ENCODE measurements at regions of chr6 and their contacts with region 1.

Region 1: GRCh38 chr6:18595774-18596530 is 208.8 kb downstream of the RNF144B start:
- DNase-seq: peak; percentile 46
- ATAC-seq: peak; percentile 98
- H3K4me3 ChIP-seq: no peak overlapping the region
- H3K27ac ChIP-seq: no peak overlapping the region
- H3K4me1 ChIP-seq: no peaks in the 10 kb centered on the region
- H3K27me3 ChIP-seq: no peaks in the 10 kb centered on the region
- CTCF ChIP-seq: peak; percentile 71 to 94 (median 93)
- POLR2A ChIP-seq: no peak
- RAD21 ChIP-seq: peak; percentile 94

Region 2: GRCh38 chr6:18439581-18439980 is 156.4 kb before region 1 on chr6:
- CTCF ChIA-PET with region 1: no interaction called
- POLR2A ChIA-PET with region 1: no interaction called
- RAD21 ChIA-PET with region 1: no interaction called
- intact Hi-C with region 1: no loop called
- DNase-seq: no peak
- ATAC-seq: no peak
- H3K4me3 ChIP-seq: no peak overlapping the region
- H3K27ac ChIP-seq: no peak overlapping the region
- H3K4me1 ChIP-seq: peaks cover 4 to 6% of the 10 kb centered on the region in 2 experiments
- H3K27me3 ChIP-seq: no peaks in the 10 kb centered on the region
- CTCF ChIP-seq: no peak
- POLR2A ChIP-seq: no peak
- RAD21 ChIP-seq: no peak

Region 3: GRCh38 chr6:18748314-18748713 is 152.4 kb after region 1 on chr6:
- CTCF ChIA-PET with region 1: no interaction called
- POLR2A ChIA-PET with region 1: no interaction called
- RAD21 ChIA-PET with region 1: no interaction called
- intact Hi-C with region 1: loop called (anchors 5 kb)
- DNase-seq: no peak
- ATAC-seq: no peak
- H3K4me3 ChIP-seq: no peak overlapping the region
- H3K27ac ChIP-seq: no peak overlapping the region
- H3K4me1 ChIP-seq: no peaks in the 10 kb centered on the region
- H3K27me3 ChIP-seq: peaks cover 3% of the 10 kb centered on the region; the same call in 1 of the 2 replicates
- CTCF ChIP-seq: no peak
- POLR2A ChIP-seq: no peak
- RAD21 ChIP-seq: no peak

Region 4: GRCh38 chr6:18990059-18990978 is 394.4 kb after region 1 on chr6:
- CTCF ChIA-PET with region 1: no interaction called
- POLR2A ChIA-PET with region 1: no interaction called
- RAD21 ChIA-PET with region 1: no interaction called
- intact Hi-C with region 1: loop called (anchors 5 kb)
- DNase-seq: peak; percentile 55
- ATAC-seq: peak; percentile 96
- H3K4me3 ChIP-seq: peak overlapping the region in 1 of 2 experiments; percentile 6; a peak in 1 of 4 replicates
- H3K27ac ChIP-seq: no peak overlapping the region
- H3K4me1 ChIP-seq: peaks cover 0 to 6% of the 10 kb centered on the region in 2 experiments; a peak in 1 of 4 replicates
- H3K27me3 ChIP-seq: no peaks in the 10 kb centered on the region
- CTCF ChIP-seq: peak; percentile 45 to 78 (median 76); a peak in 5 of 6 replicates
- POLR2A ChIP-seq: no peak
- RAD21 ChIP-seq: peak; percentile 66

Region 5: GRCh38 chr6:19107468-19107867 is 511.5 kb after region 1 on chr6:
- CTCF ChIA-PET with region 1: no interaction called
- POLR2A ChIA-PET with region 1: no interaction called
- RAD21 ChIA-PET with region 1: no interaction called
- intact Hi-C with region 1: no loop called
- DNase-seq: no peak
- ATAC-seq: no peak
- H3K4me3 ChIP-seq: no peak overlapping the region
- H3K27ac ChIP-seq: no peak overlapping the region
- H3K4me1 ChIP-seq: no peaks in the 10 kb centered on the region
- H3K27me3 ChIP-seq: no peaks in the 10 kb centered on the region
- CTCF ChIP-seq: no peak
- POLR2A ChIP-seq: no peak
- RAD21 ChIP-seq: no peak

Region 6: GRCh38 chr6:20126789-20127653 is 1531.1 kb after region 1 on chr6:
- CTCF ChIA-PET with region 1: interaction called, 3 read pairs
- POLR2A ChIA-PET with region 1: no interaction called
- RAD21 ChIA-PET with region 1: no interaction called
- intact Hi-C with region 1: loop called (anchors 10 kb)
- DNase-seq: peak; percentile 35
- ATAC-seq: peak; percentile 93
- H3K4me3 ChIP-seq: no peak overlapping the region
- H3K27ac ChIP-seq: no peak overlapping the region; the same call in 1 of the 2 replicates
- H3K4me1 ChIP-seq: peaks cover 15 to 38% of the 10 kb centered on the region in 2 experiments; a peak in 3 of 4 replicates
- H3K27me3 ChIP-seq: no peaks in the 10 kb centered on the region
- CTCF ChIP-seq: peak; percentile 66 to 99 (median 97); a peak in 5 of 6 replicates
- POLR2A ChIP-seq: no peak
- RAD21 ChIP-seq: peak; percentile 61